ENCODE measurements at regions of chr1 and their contacts with region 1.

Region 1: GRCh38 chr1:151059078-151059907 is at the start of gene CDC42SE1:
- H3K4me3 ChIP-seq: peak within 1 kb of the TSS; percentile 89
- H3K27ac ChIP-seq: peak within 1 kb of the TSS; percentile 83
- H3K4me1 ChIP-seq: peaks cover 4% of the 10 kb centered on the region; the same call in 1 of the 2 replicates
- CTCF ChIP-seq: peak; percentile 98

Region 2: GRCh38 chr1:150720703-150721102 is 338.6 kb before region 1 on chr1 and contains the start of gene HORMAD1:
- CTCF ChIA-PET with region 1: no interaction called
- POLR2A ChIA-PET with region 1: no interaction called
- H3K4me3 ChIP-seq: no peak within 1 kb of the TSS
- H3K27ac ChIP-seq: no peak within 1 kb of the TSS
- H3K4me1 ChIP-seq: no peaks in the 10 kb centered on the region
- CTCF ChIP-seq: no peak

Region 3: DNA sequence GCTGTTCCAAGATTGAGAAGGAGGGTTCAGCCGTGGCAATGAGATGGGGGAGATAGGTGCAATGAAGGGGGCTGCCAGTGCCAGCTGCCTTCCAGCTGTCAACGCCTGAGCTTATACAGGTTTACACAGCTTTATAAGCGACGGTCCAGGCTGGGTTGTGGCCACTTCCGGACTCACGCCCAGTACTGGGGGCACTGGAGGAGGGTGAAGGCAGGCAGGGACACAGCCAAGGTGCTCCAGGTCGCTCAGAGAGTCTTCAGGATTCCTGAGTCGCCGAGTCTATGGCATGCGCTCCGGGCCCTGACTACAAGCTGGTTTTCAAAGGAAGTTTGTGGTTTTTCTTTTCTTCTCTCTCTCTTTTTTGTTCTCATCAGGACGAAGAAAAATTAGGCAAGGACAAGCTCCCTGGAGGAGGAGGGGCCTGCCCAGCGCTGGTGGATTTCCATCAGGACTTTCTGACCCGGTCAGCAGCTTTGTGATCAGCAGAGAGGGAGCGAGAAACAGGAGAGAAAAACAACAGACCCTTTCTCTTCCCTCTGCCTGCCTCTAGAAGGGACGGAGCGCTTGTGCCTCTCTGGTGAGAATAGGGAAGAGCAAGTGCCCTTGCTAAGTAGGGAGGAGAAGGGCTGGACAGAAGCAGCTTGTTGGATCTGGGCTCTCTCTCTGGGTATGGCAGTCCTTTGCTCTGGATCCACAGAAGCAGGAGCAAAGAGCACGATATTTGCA is 52.8 kb before region 1 on chr1 and contains the start of gene MINDY1:
- CTCF ChIA-PET with region 1: interaction called, 4 read pairs
- POLR2A ChIA-PET with region 1: interaction called, 16 read pairs
- H3K4me3 ChIP-seq: peak within 1 kb of the TSS; percentile 53
- H3K27ac ChIP-seq: peak within 1 kb of the TSS; percentile 58
- H3K4me1 ChIP-seq: 0 out of 2 replicates have a peak, but pooled peaks cover 3% of the 10 kb centered on the region
- CTCF ChIP-seq: no peak

Region 4: GRCh38 chr1:151024540-151025146 is 34.6 kb before region 1 on chr1:
- CTCF ChIA-PET with region 1: interaction called, 17 read pairs
- POLR2A ChIA-PET with region 1: no interaction called
- H3K4me3 ChIP-seq: no peak overlapping the region
- H3K27ac ChIP-seq: no peak overlapping the region
- H3K4me1 ChIP-seq: no peaks in the 10 kb centered on the region
- CTCF ChIP-seq: peak; percentile 66

Region 5: DNA sequence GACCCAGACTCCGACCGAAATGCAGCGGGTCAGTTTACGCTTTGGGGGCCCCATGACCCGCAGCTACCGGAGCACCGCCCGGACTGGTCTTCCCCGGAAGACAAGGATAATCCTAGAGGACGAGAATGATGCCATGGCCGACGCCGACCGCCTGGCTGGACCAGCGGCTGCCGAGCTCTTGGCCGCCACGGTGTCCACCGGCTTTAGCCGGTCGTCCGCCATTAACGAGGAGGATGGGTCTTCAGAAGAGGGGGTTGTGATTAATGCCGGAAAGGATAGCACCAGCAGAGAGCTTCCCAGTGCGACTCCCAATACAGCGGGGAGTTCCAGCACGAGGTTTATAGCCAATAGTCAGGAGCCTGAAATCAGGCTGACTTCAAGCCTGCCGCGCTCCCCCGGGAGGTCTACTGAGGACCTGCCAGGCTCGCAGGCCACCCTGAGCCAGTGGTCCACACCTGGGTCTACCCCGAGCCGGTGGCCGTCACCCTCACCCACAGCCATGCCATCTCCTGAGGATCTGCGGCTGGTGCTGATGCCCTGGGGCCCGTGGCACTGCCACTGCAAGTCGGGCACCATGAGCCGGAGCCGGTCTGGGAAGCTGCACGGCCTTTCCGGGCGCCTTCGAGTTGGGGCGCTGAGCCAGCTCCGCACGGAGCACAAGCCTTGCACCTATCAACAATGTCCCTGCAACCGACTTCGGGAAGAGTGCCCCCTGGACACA is 11.2 kb before region 1 on chr1:
- CTCF ChIA-PET with region 1: interaction called, 15 read pairs
- POLR2A ChIA-PET with region 1: interaction called, 17 read pairs
- H3K4me3 ChIP-seq: peak overlapping the region; percentile 52
- H3K27ac ChIP-seq: peak overlapping the region; percentile 81
- H3K4me1 ChIP-seq: no peaks in the 10 kb centered on the region
- CTCF ChIP-seq: peak; percentile 68; the same call in 1 of the 2 replicates

Region 6: DNA sequence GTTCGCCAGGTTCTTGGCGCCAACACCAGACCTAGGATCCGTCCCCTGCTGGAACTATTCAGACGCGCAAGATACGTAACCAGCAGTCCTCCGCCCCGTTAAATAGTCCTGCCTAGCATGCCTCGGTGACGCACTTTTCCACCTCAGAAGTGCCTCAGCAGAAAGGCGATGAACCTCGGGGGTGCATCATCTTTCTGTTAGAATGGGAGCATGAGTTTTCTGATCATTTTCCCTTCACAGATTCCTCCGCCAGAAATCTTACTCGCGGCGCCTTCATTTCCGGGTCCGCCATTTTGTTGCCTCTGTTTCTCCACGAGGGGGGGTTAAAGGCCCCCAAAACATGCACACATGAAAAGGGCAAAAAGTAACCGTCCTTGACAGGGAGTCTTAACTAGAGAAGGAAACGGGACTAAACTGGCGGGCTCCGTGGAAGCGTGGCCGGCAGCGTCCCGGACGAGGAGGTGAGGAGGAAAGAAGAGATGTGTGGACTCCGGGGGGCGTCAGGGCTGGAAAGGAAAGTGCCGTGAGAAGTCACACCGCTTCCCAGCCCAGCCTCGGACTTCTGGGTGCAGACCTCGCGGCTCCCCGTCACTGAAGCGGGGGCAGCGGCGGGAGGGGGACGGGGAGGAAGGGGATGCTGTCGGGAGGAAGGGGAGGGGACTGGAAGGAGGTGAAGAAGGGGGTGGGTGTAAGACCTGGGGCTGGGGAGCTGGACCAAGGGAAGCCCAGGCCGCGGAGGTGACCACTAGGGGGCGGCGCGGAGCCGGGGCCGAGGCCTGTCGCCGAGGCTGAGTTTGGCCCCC is 11.4 kb after region 1 on chr1 and contains the start of gene GABPB2:
- CTCF ChIA-PET with region 1: interaction called, 9 read pairs
- POLR2A ChIA-PET with region 1: interaction called, 20 read pairs
- H3K4me3 ChIP-seq: peak within 1 kb of the TSS; percentile 84
- H3K27ac ChIP-seq: peak within 1 kb of the TSS; percentile 90
- H3K4me1 ChIP-seq: no peaks in the 10 kb centered on the region
- CTCF ChIP-seq: peak; percentile 85

Measured in HEK293 (cell line).